ENCODE measurements at regions of chr6 and their contacts with region 1.

Region 1: DNA sequence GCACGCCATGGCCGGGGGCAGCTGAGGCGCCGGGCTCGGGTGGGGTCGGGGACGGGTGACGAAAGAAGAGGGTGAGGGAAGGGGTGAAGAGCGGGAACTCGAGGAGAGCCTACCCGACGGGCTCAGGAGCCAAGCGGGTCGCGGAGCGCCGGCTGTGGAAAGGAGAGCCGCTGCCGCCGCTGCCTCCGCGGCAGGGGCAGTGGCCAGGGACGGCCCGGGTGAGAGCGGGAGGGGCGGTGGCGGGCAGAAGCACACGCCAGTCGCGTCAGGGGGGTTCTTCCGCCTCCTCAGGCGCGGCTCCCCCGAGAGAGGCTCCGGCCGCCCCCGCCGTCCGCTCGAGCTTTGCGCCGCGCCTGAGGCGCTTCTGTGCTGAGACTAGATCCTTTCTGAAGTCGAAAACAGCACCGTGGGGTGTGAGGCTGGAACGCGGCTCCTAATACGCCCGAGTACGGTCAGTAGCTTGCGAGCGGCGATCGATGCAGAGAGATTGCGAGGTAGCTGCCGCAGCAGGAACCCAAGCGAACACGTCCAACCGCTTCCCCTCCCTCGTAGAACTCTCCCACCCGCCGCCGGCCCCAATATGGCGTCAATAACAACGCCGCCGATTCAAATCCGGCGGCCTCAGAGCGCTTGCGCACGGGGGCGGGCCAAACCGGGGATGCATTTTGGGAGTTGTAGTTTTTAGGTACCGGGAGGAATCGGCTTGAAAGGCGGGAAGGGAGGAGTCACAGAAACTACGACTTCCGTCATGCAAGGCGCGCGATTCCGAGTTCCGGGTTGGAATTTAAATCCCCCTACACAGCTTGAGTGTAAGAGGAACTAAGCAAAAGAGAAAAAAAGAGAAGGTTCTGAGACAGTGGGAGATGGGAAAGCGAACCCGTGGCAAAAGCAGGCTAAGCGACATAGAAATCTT is at the start of gene AKIRIN2:
- DNase-seq: peak; percentile 94 to 99 (median 96)
- ATAC-seq: peak; percentile 85
- H3K4me3 ChIP-seq: peak within 1 kb of the TSS; percentile 72 to 96
- H3K4me3 Mint-ChIP-seq: peak within 1 kb of the TSS; percentile 92
- H3K27ac ChIP-seq: peak within 1 kb of the TSS; percentile 93
- H3K27ac Mint-ChIP-seq: peak within 1 kb of the TSS; percentile 96
- H3K4me1 ChIP-seq: peaks cover 17% of the 10 kb centered on the region
- H3K4me1 Mint-ChIP-seq: peaks cover 43% of the 10 kb centered on the region
- H3K27me3 ChIP-seq: no peaks in the 10 kb centered on the region
- H3K27me3 Mint-ChIP-seq: no peaks in the 10 kb centered on the region
- CTCF ChIP-seq: no peak
- total RNA-seq, gene AKIRIN2: 79.4 to 82.4 TPM

Region 2: DNA sequence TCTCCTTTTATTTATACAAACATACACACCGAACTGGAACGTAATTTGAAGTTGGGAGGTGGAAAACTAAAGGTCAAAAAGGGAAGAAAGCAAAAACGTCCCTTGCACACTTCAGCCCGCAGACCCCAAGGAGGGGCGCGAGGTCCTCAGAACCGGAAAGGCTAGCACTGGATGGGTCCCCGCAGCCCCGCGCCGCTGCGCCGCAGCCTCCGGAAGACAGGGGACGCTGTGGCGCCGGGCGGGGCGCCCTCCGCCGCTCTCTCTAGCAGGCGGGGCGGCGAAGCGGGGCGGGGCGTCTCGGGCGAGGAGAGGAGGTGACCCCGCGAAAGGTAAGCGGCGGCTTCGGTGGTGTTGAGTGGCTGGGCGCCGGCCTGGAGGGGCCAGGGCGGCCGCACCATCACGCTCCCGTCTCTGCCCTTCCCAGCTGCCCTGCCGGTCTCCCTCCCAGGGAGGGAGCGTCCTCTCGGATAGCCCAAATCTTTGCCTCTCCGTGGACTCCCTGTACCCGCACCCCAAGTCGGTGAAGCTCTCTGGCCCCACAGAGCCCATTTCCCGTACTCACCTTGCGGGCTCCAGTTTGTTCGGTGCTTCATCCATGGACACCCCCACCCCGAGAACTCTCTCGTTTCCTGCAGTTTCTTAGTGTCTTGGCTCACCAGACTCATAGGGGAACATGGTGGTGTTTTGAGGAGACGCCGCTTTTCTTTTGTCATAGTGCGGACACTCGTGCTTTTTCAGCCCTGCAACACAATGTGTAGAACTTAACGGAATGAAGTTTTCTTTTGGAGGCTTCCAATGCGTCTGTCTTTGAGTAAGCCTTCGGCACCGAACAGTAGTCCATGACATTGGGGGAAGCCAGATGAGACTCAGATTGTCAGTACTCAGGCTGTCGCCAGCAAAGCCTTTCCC is 379.4 kb before region 1 on chr6 and contains the start of gene SMIM8:
- CTCF ChIA-PET with region 1: no interaction called
- POLR2A ChIA-PET with region 1: no interaction called
- intact Hi-C with region 1: loop called (anchors 1 to 5 kb)
- DNase-seq: peak; percentile 66 to 90 (median 86)
- ATAC-seq: peak; percentile 99
- H3K4me3 ChIP-seq: peak within 1 kb of the TSS; percentile 72 to 86
- H3K4me3 Mint-ChIP-seq: peak within 1 kb of the TSS; percentile 94
- H3K27ac ChIP-seq: peak within 1 kb of the TSS; percentile 52 to 58
- H3K27ac Mint-ChIP-seq: peak within 1 kb of the TSS; percentile 90
- H3K4me1 ChIP-seq: peaks cover 6% of the 10 kb centered on the region
- H3K4me1 Mint-ChIP-seq: peaks cover 25% of the 10 kb centered on the region
- H3K27me3 ChIP-seq: no peaks in the 10 kb centered on the region
- H3K27me3 Mint-ChIP-seq: no peaks in the 10 kb centered on the region
- CTCF ChIP-seq: peak; percentile 99
- total RNA-seq, gene SMIM8: 4.2 TPM

Region 3: GRCh38 chr6:87407901-87408720 is 293.8 kb before region 1 on chr6 and contains the start of gene CFAP206:
- CTCF ChIA-PET with region 1: no interaction called
- POLR2A ChIA-PET with region 1: interaction called, 5 read pairs
- intact Hi-C with region 1: loop called (anchors 1 to 5 kb)
- DNase-seq: peak; percentile 50 to 90 (median 77)
- ATAC-seq: peak; percentile 77
- H3K4me3 ChIP-seq: peak within 1 kb of the TSS; percentile 65 to 91
- H3K4me3 Mint-ChIP-seq: peak within 1 kb of the TSS; percentile 87
- H3K27ac ChIP-seq: peak within 1 kb of the TSS; percentile 64 to 71
- H3K27ac Mint-ChIP-seq: peak within 1 kb of the TSS; percentile 57
- H3K4me1 ChIP-seq: peaks cover 10% of the 10 kb centered on the region
- H3K4me1 Mint-ChIP-seq: peaks cover 7% of the 10 kb centered on the region
- H3K27me3 ChIP-seq: peaks cover 3 to 5% of the 10 kb centered on the region in 2 experiments
- H3K27me3 Mint-ChIP-seq: peaks cover 17% of the 10 kb centered on the region
- CTCF ChIP-seq: no peak
- total RNA-seq, gene CFAP206: not detected

Region 4: GRCh38 chr6:87589693-87590549 is 112.0 kb before region 1 on chr6 and contains the starts of genes ORC3 and RARS2:
- CTCF ChIA-PET with region 1: interaction called, 3 read pairs
- POLR2A ChIA-PET with region 1: interaction called, 17 read pairs
- intact Hi-C with region 1: loop called (anchors 1 kb)
- DNase-seq: peak; percentile 85 to 96 (median 93)
- ATAC-seq: peak; percentile 98
- H3K4me3 ChIP-seq: peak within 1 kb of the TSS; percentile 69 to 89
- H3K4me3 Mint-ChIP-seq: peak within 1 kb of the TSS; percentile 93
- H3K27ac ChIP-seq: peak within 1 kb of the TSS; percentile 60 to 78
- H3K27ac Mint-ChIP-seq: peak within 1 kb of the TSS; percentile 92
- H3K4me1 ChIP-seq: peaks cover 35% of the 10 kb centered on the region
- H3K4me1 Mint-ChIP-seq: peaks cover 64% of the 10 kb centered on the region
- H3K27me3 ChIP-seq: no peaks in the 10 kb centered on the region
- H3K27me3 Mint-ChIP-seq: no peaks in the 10 kb centered on the region
- CTCF ChIP-seq: no peak
- total RNA-seq, gene ORC3: 9.4 to 9.9 TPM
- total RNA-seq, gene RARS2: 15.8 to 20.4 TPM

Region 5: DNA sequence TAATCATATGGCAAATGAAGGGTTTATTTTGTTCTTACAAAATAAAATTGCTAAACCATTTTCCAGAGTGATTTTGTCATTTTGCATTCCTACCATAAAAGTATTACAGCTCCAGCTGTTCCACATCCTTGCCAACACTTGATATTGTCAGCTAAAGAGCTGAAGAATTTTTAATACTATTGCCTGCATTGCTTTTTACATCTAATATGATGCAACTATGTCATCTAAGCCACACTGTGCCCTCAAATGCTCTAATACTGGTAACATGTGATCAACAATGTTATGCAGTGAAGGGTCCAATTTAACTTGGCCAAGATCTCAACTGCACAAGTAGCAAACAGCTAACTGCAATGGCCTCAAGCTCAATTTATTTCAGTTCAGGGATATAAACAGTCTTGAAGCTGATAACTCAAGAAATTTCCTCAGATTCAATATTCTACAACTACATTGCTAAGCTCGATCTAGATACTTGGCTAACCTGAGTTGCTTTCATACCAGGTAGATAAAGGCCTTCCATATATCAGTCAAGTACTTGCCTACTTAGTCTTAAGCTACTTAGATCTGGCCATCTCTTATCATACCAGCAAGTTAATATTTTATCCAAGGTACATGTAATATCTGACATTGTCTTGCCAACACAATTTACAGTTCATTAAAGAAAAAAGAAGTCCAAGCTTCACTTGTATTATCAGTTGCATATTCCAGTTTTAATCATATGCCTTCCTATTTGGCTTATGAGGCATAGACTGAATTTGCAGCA is 16.9 kb before region 1 on chr6:
- CTCF ChIA-PET with region 1: interaction called, 4 read pairs
- POLR2A ChIA-PET with region 1: interaction called, 9 read pairs
- intact Hi-C with region 1: loop called in 1 of 2 experiments (anchors 2 kb)
- DNase-seq: no peak
- ATAC-seq: no peak
- H3K4me3 ChIP-seq: no peak overlapping the region
- H3K4me3 Mint-ChIP-seq: no peak overlapping the region
- H3K27ac ChIP-seq: no peak overlapping the region
- H3K27ac Mint-ChIP-seq: no peak overlapping the region
- H3K4me1 ChIP-seq: peaks cover 17% of the 10 kb centered on the region
- H3K4me1 Mint-ChIP-seq: peaks cover 74% of the 10 kb centered on the region
- H3K27me3 ChIP-seq: no peaks in the 10 kb centered on the region
- H3K27me3 Mint-ChIP-seq: no peaks in the 10 kb centered on the region
- CTCF ChIP-seq: no peak

Region 6: DNA sequence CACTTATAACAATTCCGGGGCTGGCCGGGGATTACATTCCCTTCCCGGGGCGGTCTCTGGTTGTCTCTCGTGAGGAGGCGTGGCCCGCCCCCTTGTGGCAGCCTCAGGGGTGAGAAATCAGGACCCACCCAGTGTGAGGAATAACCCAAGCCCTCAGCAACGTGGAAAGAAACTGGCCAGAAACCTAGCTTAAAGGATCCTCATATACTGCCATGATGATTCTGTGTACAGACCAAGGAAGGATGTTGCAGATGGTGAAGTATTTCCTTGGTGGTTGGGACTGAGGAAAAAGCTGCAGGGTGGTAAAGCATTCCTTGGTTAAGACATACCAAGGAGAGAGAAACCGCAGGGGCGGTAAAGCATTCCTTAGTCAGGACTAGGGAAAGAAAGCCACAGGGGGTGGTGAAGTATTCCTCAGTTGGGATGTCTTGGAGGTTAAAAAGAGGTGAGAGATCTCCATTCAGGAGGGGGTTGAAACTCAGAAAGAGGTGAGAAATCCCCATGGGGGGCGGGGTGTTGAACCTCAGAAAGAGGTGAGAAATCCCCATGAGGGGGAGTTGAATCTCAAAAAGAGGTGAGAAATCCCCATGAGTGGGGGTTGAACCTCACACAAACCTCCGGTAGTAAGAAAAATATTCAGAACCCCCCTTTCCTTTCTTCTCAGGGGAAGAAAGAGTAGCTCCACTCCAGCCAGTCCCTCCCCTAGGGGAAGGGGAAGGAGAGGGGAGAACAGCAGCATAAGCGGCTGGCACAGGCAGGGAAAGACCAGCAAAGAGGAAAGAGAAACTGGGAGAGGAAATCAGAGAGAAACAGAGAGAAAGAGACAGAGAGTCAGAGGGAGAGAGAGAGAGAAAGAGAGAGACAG is 1023.4 kb after region 1 on chr6:
- CTCF ChIA-PET with region 1: no interaction called
- POLR2A ChIA-PET with region 1: no interaction called
- intact Hi-C with region 1: no loop called
- DNase-seq: peak in 2 of 9 experiments; percentile 5 to 27
- ATAC-seq: no peak
- H3K4me3 ChIP-seq: no peak overlapping the region
- H3K4me3 Mint-ChIP-seq: no peak overlapping the region
- H3K27ac ChIP-seq: no peak overlapping the region
- H3K27ac Mint-ChIP-seq: no peak overlapping the region
- H3K4me1 ChIP-seq: no peaks in the 10 kb centered on the region
- H3K4me1 Mint-ChIP-seq: peaks cover 12% of the 10 kb centered on the region
- H3K27me3 ChIP-seq: no peaks in the 10 kb centered on the region
- H3K27me3 Mint-ChIP-seq: no peaks in the 10 kb centered on the region
- CTCF ChIP-seq: no peak

Region 7: DNA sequence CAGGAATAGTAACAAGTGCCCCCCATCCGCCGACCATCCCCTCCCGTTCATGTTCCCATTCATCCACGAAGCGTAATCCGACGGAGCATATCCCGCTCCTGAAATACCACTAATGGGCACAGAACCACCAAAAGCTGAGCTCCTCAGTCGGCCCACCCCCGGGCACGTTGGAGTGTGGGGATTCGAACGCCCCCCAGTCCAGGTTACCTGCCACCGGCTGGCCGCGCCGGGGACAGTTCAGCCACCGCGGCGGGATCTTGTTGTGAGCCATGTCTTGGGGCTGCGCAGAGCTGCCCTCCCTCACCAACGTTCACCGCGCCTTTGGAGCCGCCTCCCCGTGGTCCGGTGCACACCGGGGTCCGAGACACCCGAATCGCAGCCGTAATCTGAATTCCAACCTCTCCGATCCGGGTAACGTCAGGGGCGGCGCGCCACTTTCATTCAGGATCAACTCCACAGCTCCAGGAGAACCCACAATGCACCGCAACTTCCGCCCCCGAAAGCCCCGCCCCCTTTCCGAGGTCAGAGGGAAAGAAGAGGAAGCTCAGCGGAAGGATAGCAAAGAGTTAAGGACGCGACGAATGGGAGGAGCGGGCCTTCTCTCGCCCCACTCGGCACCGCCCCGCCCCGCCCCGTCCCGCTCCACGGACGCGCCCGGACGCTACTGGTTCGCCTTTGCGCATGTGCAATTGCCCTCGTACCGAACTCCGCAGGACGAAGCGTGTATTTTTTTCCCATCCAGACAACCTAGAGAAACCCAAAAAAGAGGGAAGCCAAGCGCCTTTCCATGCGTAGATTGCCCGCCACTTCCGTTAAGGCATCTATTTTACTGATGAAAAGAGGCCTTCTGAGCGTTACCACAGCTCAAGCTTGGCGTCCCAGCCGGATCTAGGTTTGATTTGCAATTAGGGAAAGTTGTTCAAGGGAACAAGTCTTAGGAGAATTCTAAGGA is 1261.5 kb after region 1 on chr6 and contains the start of gene RNGTT:
- CTCF ChIA-PET with region 1: no interaction called
- POLR2A ChIA-PET with region 1: no interaction called
- intact Hi-C with region 1: loop called in 1 of 2 experiments (anchors 1 kb)
- DNase-seq: peak; percentile 95 to 98 (median 98)
- ATAC-seq: peak; percentile 99
- H3K4me3 ChIP-seq: peak within 1 kb of the TSS; percentile 90 to 92
- H3K4me3 Mint-ChIP-seq: peak within 1 kb of the TSS; percentile 98
- H3K27ac ChIP-seq: peak within 1 kb of the TSS; percentile 58 to 73
- H3K27ac Mint-ChIP-seq: peak within 1 kb of the TSS; percentile 94
- H3K4me1 ChIP-seq: peaks cover 20% of the 10 kb centered on the region
- H3K4me1 Mint-ChIP-seq: peaks cover 51% of the 10 kb centered on the region
- H3K27me3 ChIP-seq: no peaks in the 10 kb centered on the region
- H3K27me3 Mint-ChIP-seq: no peaks in the 10 kb centered on the region
- CTCF ChIP-seq: no peak
- total RNA-seq, gene RNGTT: 10.1 to 10.3 TPM

Region 8: DNA sequence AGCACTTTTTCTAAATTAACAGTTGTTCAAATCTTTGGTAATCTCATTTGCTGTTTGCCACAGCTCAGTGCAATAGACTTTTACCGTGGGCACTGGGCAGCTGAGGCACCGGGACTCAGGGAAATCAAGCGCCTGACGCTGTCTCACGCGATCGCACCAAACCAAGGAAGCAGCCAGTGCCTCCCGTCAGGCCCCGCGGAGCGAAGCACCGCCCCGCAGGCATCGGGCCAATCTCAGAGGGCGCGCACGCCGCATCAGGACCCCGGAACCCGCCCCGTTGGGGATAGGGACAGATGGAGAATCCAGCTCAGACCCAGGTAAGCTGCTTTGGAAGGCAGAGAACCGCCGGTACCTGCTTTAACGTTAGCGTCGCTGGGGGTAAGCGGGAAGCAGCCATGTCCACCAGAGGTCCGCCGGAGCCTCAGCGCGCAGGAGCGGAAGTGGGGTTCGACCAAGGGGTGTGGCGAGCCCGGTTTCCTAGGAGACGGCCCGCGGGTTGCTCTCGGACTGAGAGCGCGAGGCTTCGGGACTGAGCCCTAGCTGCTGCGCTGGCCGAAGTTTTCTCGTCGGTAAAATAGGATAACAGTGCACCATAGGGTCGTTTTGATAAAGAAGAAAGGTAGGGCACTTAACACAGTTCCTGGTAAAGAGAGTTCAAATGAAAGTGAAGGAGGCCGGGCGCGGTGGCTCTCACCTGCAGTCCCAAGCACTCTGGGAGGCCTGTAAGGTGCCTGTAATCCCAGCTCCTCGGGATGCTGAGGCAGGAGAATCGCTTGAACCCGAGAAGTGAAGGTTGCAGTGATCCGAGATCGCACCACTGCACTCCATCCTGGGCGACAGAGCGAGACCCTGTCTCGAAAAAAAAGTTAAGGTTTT is 1936.6 kb after region 1 on chr6 and contains the start of gene LYRM2:
- CTCF ChIA-PET with region 1: no interaction called
- POLR2A ChIA-PET with region 1: no interaction called
- intact Hi-C with region 1: loop called in 1 of 2 experiments (anchors 5 kb)
- DNase-seq: peak; percentile 83 to 95 (median 89)
- ATAC-seq: peak; percentile 95
- H3K4me3 ChIP-seq: peak within 1 kb of the TSS; percentile 84 to 90
- H3K4me3 Mint-ChIP-seq: peak within 1 kb of the TSS; percentile 99
- H3K27ac ChIP-seq: peak within 1 kb of the TSS; percentile 91 to 98
- H3K27ac Mint-ChIP-seq: peak within 1 kb of the TSS; percentile 99
- H3K4me1 ChIP-seq: peaks cover 15% of the 10 kb centered on the region
- H3K4me1 Mint-ChIP-seq: peaks cover 34% of the 10 kb centered on the region
- H3K27me3 ChIP-seq: no peaks in the 10 kb centered on the region
- H3K27me3 Mint-ChIP-seq: no peaks in the 10 kb centered on the region
- CTCF ChIP-seq: no peak
- total RNA-seq, gene LYRM2: 16.7 to 17.8 TPM